ENCODE measurements at regions of chr1 and their contacts with region 1.

Region 1: GRCh38 chr1:1777950-1778662 is at the start of gene NADK:
- DNase-seq: peak; percentile 64 to 82 (median 69)
- H3K4me3 ChIP-seq: peak within 1 kb of the TSS; percentile 74
- H3K27ac ChIP-seq: peak within 1 kb of the TSS; percentile 80 to 95
- H3K4me1 ChIP-seq: peaks cover 50% of the 10 kb centered on the region
- H3K27me3 ChIP-seq: no peaks in the 10 kb centered on the region
- CTCF ChIP-seq: no peak
- EP300 ChIP-seq: no peak
- POLR2A ChIP-seq: peak; percentile 69
- total RNA-seq, gene NADK: 45.1 to 76.0 (median 62.7) TPM

Region 2: GRCh38 chr1:1826356-1827088 is 48.4 kb after region 1 on chr1:
- intact Hi-C with region 1: no loop called
- DNase-seq: no peak
- H3K4me3 ChIP-seq: no peak overlapping the region
- H3K27ac ChIP-seq: no peak overlapping the region
- H3K4me1 ChIP-seq: peaks cover 1% of the 10 kb centered on the region
- H3K27me3 ChIP-seq: no peaks in the 10 kb centered on the region
- CTCF ChIP-seq: no peak
- EP300 ChIP-seq: no peak
- POLR2A ChIP-seq: no peak

Region 3: DNA sequence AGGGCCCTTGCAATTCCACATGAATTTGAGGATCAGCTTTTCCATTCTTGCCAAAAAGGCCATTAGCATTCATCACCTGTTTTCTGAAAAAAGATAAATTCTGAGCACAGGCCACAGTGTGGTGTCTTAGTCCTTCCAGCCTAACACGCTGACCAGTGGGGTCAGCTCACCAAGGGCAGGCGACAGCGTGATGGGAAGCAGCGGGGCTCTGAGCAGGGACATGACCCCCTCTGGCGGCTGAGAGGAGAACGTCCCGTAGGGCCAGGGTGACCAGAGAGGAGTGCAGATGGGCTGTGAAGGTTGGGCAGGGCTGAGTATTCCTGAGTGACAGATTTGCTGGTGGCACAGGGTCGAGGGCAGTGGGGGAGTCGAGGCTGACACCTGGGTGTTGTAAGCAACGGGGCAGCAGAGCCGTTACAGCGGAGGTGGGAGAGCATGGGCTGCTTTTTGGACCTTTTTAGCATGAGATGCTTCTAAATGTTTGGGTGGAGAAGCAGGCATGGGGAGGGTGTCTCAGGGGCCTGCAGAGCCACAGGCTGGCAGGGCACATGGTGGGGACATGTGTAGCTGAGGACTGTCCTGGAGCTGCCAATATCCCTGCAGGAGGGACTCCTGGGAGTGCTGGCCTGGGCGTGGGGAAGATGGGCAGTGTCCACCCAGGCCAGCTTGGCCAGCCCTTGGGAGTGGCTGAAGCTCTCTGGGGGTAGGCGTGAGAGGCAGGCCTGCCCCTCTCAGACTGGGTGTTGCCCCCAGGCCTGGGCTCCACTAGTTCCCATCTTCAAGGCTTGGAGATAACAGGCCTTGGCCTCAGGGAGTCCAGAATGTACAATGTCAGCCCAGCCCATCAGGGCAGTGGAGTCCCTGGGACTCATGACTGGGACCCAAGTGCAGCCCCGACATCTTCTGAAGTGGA is 128.3 kb after region 1 on chr1:
- intact Hi-C with region 1: loop called in 1 of 4 experiments (anchors 5 kb)
- DNase-seq: peak; percentile 80 to 85 (median 84)
- H3K4me3 ChIP-seq: no peak overlapping the region
- H3K27ac ChIP-seq: no peak overlapping the region
- H3K4me1 ChIP-seq: peaks cover 4% of the 10 kb centered on the region
- H3K27me3 ChIP-seq: no peaks in the 10 kb centered on the region
- CTCF ChIP-seq: peak; percentile 68 to 91 (median 89)
- EP300 ChIP-seq: no peak
- POLR2A ChIP-seq: no peak

Region 4: GRCh38 chr1:2049718-2050427 is 271.8 kb after region 1 on chr1 and contains the start of gene PRKCZ:
- intact Hi-C with region 1: no loop called
- DNase-seq: peak; percentile 51 to 76 (median 63)
- H3K4me3 ChIP-seq: peak within 1 kb of the TSS; percentile 39
- H3K27ac ChIP-seq: no peak within 1 kb of the TSS
- H3K4me1 ChIP-seq: peaks cover 4% of the 10 kb centered on the region
- H3K27me3 ChIP-seq: no peaks in the 10 kb centered on the region
- CTCF ChIP-seq: no peak
- EP300 ChIP-seq: no peak
- POLR2A ChIP-seq: no peak
- total RNA-seq, gene PRKCZ: 3.4 to 16.1 (median 5.9) TPM

Region 5: GRCh38 chr1:2108213-2108876 is 330.2 kb after region 1 on chr1:
- intact Hi-C with region 1: no loop called
- DNase-seq: no peak
- H3K4me3 ChIP-seq: no peak overlapping the region
- H3K27ac ChIP-seq: no peak overlapping the region
- H3K4me1 ChIP-seq: no peaks in the 10 kb centered on the region
- H3K27me3 ChIP-seq: no peaks in the 10 kb centered on the region
- CTCF ChIP-seq: no peak
- EP300 ChIP-seq: no peak
- POLR2A ChIP-seq: no peak

Region 6: DNA sequence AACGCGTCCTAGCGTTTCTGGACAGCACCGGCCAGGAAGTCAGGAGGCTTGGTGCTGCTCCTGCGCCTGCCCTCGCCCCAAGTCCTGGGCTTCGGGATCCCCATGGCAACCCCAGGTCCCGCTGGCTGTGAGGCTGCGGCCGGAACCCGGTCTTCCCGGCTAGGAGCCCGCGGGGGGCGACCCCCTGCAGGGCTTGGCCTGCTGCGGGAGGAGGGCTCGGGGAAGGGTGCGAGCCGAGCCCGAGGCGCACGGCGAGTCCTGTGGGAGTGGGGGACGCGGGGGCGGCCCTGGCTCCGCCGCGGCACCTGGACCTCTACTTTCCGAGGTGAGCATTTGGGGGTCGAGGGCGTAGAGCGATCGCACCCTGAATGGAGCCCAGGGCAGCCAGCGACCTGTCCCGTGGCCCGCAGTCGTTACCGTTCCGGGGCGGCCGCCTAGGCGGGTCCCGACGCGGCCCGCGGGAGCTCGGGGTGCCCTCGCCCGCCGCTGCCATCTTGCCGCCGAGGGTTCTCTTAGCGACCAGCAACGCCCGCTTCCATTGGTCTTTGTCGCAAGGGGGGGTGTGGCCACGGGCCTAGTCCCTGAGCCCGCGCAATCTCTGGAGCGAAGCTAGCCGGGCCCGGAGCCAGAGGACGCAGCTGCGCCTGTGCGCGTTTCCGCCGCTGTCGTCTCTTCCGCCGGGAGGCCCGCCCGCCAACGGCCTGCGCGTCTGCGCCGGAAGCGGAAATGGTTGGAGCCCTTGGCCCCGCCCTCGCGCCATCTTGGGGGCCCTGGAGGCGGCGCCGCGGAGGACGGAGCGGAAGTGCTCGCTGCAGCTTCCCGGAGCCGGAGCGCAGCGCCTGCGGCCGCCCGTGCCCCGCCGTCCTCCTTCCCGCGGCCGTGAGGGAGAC is 613.2 kb after region 1 on chr1 and contains the starts of genes MORN1 and RER1:
- intact Hi-C with region 1: no loop called
- DNase-seq: peak; percentile 99 to 100 (median 99)
- H3K4me3 ChIP-seq: peak within 1 kb of the TSS; percentile 96
- H3K27ac ChIP-seq: peak within 1 kb of the TSS; percentile 57 to 70
- H3K4me1 ChIP-seq: peaks cover 11% of the 10 kb centered on the region
- H3K27me3 ChIP-seq: no peaks in the 10 kb centered on the region
- CTCF ChIP-seq: no peak
- EP300 ChIP-seq: peak; percentile 64
- POLR2A ChIP-seq: peak; percentile 90
- total RNA-seq, gene MORN1: 15.6 to 24.2 (median 17.8) TPM
- total RNA-seq, gene RER1: 51.0 to 130 (median 99.0) TPM

Measured in ovary (tissue), 10 donors.